GM10248 (cell line): ENCODE measurements at regions of chr11 and their contacts with region 1.

Region 1: GRCh38 chr11:102367364-102367763 is 20.4 kb downstream of the BIRC2 start:
- DNase-seq: no peak
- CTCF ChIP-seq: no peak

Region 2: DNA sequence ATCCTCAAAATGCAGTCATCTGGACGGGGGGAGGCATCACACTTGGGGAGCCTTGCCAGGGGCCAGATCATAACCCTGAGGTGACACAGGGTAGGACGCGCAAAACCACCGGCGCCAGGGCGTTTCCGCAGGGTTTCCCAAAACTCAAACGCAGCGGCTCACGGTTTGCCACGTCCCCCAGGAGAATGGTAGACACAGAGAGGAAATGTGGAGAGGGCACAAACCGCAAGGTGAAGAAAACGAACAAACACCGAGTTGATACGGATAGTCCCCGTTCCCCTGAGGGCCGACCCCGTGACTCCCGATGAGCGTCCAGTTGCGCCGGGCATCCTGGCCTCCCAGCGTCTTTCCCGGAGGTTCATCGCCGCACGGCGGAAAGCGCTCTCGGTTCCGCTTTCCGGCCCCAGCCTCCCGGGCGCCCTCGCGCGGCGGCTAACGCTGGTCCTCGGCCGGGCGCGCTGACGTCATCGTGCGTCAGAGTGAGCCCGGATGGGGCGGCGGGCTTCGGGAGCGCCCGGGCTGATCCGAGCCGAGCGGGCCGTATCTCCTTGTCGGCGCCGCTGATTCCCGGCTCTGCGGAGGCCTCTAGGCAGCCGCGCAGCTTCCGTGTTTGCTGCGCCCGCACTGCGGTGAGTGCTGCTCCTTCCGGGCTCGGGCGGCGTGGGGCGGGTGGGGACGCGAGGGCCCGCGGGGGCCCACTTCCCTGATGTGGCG is 20.5 kb before region 1 on chr11 and contains the start of gene BIRC2:
- CTCF ChIA-PET with region 1: interaction called, 13 read pairs
- POLR2A ChIA-PET with region 1: no interaction called
- DNase-seq: peak; percentile 90
- CTCF ChIP-seq: peak; percentile 90

Region 3: DNA sequence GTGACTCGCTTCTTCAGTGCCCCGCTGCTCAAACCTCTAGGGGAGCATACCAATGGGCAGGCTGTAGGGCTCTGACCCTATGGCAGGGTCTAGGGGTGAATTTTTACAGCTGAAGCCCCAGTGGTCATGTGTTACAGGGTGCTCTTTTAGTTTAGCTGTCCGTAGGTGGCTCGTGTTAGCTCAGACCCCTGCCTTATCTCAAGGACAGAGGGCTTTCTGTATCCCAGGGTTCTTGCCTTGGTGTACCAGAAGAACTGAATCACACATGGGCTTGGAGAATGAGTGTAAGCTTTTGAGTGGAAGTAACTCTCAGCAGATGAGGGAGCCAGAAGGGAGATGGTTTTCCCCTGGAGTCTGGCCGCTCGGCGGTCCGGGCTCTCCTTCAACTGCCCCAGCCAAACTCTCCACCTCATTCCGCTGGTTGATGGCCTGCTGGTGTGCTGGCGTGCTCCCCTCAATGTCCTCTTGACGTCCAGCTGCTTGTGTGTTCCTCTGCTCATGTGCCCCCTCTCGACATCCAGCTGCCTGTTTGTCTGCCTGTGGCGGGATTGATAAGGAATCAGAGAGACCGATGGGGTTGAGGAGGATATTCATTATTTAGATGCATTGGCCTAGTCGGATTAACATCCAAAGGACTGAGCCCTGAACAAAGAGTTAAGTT is 17.2 kb after region 1 on chr11:
- CTCF ChIA-PET with region 1: interaction called, 11 read pairs
- POLR2A ChIA-PET with region 1: no interaction called
- DNase-seq: no peak
- CTCF ChIP-seq: no peak

Region 4: DNA sequence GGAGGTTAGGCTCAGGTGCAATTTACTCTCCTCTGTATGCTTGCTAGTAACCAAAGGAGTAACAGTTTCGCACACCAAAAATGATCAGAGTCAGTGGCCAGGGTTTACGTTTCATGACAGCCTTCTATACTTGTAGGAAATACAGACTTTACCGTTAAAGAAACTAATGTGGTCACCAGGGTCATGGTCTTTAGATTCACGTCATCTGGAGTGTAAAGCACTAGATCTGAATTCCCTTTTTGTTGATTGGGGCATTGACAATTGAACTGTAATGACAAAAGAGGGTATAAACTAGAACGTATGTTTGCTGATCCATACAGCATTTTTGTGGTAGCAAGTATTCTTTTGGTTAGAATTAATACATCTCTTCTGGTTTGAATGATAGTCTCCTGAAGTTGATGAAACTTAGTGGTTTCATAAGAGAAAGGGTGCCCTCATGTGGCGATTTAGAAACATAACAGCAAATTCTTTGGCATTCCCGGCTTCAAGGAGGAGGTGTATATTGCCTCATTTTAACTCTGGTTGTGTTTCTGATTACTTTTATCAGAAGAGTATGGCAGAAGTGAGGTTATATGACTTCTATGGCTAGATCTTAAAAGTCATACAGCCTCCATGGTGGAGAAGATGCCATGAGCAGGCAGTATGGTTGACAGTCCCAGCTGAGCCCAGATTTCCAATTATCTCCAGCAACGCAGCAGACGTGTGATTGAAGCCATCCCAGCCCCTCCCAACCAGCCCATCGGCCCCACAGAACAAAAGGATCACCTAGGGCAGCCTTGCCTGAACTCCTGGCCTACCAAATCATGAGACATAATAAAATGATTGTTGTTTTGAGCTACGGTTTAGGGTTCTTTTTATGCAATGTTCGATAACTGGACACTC is 128.0 kb after region 1 on chr11:
- CTCF ChIA-PET with region 1: interaction called, 15 read pairs
- POLR2A ChIA-PET with region 1: no interaction called
- DNase-seq: peak; percentile 58
- CTCF ChIP-seq: peak; percentile 68

Region 5: GRCh38 chr11:102518296-102519094 is 151.1 kb after region 1 on chr11:
- CTCF ChIA-PET with region 1: no interaction called
- POLR2A ChIA-PET with region 1: no interaction called
- DNase-seq: no peak
- CTCF ChIP-seq: peak; percentile 9

Region 6: GRCh38 chr11:102727890-102728289 is 360.5 kb after region 1 on chr11:
- CTCF ChIA-PET with region 1: no interaction called
- POLR2A ChIA-PET with region 1: no interaction called
- DNase-seq: no peak
- CTCF ChIP-seq: no peak